Activated CD8-positive, alpha-beta T cell treated with anti-CD3 and anti-CD28 coated beads for 36 hours (primary cell): ENCODE measurements at regions of chr15 and their contacts with region 1.

Region 1: DNA sequence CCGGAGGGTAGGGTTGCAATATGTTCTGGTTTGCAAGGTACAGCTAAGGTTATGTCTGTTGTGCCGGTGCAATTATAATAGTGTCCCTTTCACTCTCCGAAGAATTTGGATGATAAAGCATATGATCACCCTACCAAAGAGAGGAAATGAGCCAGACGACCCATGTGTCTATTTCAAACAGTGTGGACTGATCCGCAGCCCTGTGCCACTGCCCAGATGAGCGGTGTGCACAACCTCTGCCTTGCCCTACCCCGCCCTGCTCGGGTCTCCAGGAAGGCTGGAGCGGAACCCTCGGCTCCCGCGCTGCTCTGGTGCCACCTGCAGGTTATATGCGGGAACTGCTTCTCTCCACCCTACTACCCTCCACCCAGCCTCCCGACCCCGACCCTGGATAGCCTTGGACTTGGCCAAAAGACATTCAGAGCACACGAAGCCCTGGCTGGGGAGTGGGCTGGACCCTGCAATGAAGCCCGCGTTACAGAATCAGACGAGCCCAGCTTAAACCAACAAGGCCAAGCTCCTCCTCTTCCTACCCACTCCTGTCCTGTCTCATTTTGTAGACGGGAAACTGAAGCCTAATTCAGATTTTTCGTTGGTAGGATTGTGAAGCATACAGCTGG is 68.4 kb upstream of the CHRNB4 start:
- DNase-seq: peak; percentile 75
- ATAC-seq: peak; percentile 99
- H3K4me3 Mint-ChIP-seq: no peak overlapping the region
- H3K27ac Mint-ChIP-seq: no peak overlapping the region
- H3K4me1 Mint-ChIP-seq: peaks cover under 1% of the 10 kb centered on the region
- H3K27me3 Mint-ChIP-seq: peaks cover 18% of the 10 kb centered on the region
- CTCF ChIP-seq: peak; percentile 85

Region 2: GRCh38 chr15:78322243-78322642 is 387.1 kb before region 1 on chr15:
- CTCF ChIA-PET with region 1: no interaction called
- POLR2A ChIA-PET with region 1: no interaction called
- intact Hi-C with region 1: loop called (anchors 10 kb)
- DNase-seq: no peak
- ATAC-seq: no peak
- H3K4me3 Mint-ChIP-seq: no peak overlapping the region
- H3K27ac Mint-ChIP-seq: no peak overlapping the region
- H3K4me1 Mint-ChIP-seq: no peaks in the 10 kb centered on the region
- H3K27me3 Mint-ChIP-seq: no peaks in the 10 kb centered on the region
- CTCF ChIP-seq: no peak

Region 3: DNA sequence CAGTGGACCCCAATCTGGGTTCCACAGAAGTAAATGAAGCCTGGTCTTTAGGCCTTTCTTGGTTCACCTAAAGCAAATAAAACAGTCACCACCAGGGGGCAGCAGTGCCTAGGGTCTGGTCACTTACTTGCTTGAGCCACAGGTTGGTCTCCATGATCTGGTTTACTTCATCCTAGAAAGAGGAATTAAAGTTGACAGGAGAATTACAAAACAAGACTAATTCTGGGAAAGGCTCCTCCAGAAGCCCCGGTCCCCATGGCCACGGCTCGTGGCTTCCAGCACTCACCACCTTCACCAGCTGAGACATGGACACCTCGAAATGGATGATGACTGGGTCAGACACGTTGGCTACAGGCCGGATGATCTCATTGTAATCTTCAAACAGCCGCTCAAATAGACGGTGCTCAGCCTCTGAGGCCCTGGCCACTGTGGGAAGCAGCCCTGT is 90.9 kb before region 1 on chr15:
- CTCF ChIA-PET with region 1: interaction called, 38 read pairs
- POLR2A ChIA-PET with region 1: no interaction called
- intact Hi-C with region 1: loop called (anchors 2 kb)
- DNase-seq: peak; percentile 93
- ATAC-seq: peak; percentile 64
- H3K4me3 Mint-ChIP-seq: no peak overlapping the region
- H3K27ac Mint-ChIP-seq: no peak overlapping the region
- H3K4me1 Mint-ChIP-seq: peaks cover 4% of the 10 kb centered on the region
- H3K27me3 Mint-ChIP-seq: peaks cover 37% of the 10 kb centered on the region
- CTCF ChIP-seq: peak; percentile 71

Region 4: DNA sequence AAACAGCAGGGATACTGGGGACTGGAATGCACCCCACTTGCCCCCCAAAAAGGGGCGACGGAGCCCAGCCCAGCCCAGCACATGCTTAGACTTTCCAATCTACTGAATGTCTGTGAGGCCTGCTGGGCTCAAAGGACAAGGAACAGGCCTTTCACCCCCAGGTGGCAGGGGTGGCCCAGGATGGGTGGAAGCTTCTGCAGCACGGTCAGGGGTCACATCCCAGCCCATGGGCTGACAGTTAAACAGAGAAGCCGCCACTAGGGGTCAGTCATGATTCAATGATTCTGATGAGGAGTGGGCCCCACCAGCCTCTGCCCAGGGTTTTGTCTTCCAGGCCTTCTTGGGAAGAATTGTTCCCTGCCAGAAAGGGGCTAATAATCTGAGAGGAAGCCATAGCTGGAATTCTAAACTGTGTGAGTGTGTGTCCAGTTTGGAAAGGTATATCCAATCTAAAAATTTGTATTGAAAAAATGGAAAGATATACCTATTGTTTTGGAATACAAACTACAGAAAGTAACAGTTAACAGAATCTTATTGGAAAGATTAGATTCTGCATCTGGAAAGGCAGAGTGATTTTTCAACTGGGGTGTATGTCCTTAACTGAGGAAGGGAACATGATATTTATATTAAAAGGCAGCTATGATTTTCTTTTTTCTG is 70.6 kb before region 1 on chr15:
- CTCF ChIA-PET with region 1: interaction called, 61 read pairs
- POLR2A ChIA-PET with region 1: no interaction called
- intact Hi-C with region 1: loop called (anchors 5 kb)
- DNase-seq: peak; percentile 76
- ATAC-seq: peak; percentile 66
- H3K4me3 Mint-ChIP-seq: no peak overlapping the region
- H3K27ac Mint-ChIP-seq: no peak overlapping the region
- H3K4me1 Mint-ChIP-seq: peaks cover 9% of the 10 kb centered on the region
- H3K27me3 Mint-ChIP-seq: no peaks in the 10 kb centered on the region
- CTCF ChIP-seq: peak; percentile 72

Region 5: GRCh38 chr15:78685159-78685921 is 24.0 kb before region 1 on chr15:
- CTCF ChIA-PET with region 1: interaction called, 10 read pairs
- POLR2A ChIA-PET with region 1: no interaction called
- intact Hi-C with region 1: no loop called
- DNase-seq: no peak
- ATAC-seq: no peak
- H3K4me3 Mint-ChIP-seq: no peak overlapping the region
- H3K27ac Mint-ChIP-seq: no peak overlapping the region
- H3K4me1 Mint-ChIP-seq: no peaks in the 10 kb centered on the region
- H3K27me3 Mint-ChIP-seq: no peaks in the 10 kb centered on the region
- CTCF ChIP-seq: no peak

Region 6: GRCh38 chr15:78695854-78696253 is 13.5 kb before region 1 on chr15:
- CTCF ChIA-PET with region 1: interaction called, 23 read pairs
- POLR2A ChIA-PET with region 1: no interaction called
- intact Hi-C with region 1: no loop called
- DNase-seq: no peak
- ATAC-seq: no peak
- H3K4me3 Mint-ChIP-seq: no peak overlapping the region
- H3K27ac Mint-ChIP-seq: no peak overlapping the region
- H3K4me1 Mint-ChIP-seq: no peaks in the 10 kb centered on the region
- H3K27me3 Mint-ChIP-seq: peaks cover 2% of the 10 kb centered on the region
- CTCF ChIP-seq: no peak